Left cardiac atrium (tissue), 4 donors: ENCODE measurements at regions of chr9 and their contacts with region 1.

Region 1: DNA sequence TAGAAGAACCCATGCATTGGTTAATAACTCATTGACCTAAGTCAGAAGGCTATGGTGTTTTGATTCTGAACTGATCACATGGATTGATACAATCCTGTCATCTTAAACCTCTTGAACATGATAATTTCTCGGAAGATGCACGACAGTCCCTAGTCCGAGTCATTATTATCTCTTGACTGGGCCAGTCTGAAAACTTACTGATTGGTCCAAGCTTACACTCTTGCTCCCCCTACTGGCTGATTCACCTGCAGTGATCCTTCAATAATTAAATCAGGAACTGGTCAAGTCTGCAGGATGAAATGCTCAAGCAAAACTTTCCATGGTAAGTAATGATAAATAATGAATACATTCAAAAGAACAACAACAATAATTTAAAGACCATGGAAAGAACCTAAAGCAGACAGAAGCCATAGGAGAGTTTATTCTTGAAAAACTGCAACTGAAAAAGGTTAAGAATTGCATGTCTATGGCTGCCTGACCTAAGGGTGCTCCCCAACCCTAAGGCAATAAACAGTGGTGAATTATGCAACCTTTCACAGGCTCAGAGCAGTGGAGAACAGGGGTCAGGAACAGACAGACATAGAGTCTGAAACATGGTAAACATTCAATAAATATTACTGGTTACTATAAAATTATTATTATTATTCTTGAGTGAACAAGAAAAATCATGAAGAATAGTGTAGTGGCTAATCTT is 79.3 kb downstream of the BRINP1 start:
- DNase-seq: peak; percentile 51
- ATAC-seq: peak in 1 of 2 donors; percentile 71

Region 2: GRCh38 chr9:118595719-118596305 is 694.1 kb before region 1 on chr9:
- intact Hi-C with region 1: loop called in 1 of 2 experiments (anchors 10 kb)
- DNase-seq: peak; percentile 25
- ATAC-seq: peak in 1 of 2 donors; percentile 53

Region 3: DNA sequence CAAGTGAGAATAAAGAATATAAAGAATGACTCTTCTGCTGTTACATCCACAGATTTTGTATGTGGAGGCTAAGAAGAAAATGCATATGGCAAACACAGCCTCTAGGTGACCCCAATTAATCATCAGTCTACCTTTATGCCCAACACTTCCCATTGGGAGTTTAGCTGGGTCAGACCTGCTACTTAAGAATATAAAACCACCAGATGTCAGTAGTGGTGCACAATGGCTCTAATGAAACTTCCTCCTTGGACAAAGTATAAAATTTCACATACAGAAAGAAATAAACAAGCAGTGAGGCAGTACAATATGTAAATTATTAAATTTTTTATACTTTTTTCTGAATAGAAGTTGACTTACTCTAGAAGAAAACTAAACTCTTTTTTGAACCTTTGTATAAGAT is 460.6 kb before region 1 on chr9:
- intact Hi-C with region 1: loop called (anchors 5 to 10 kb)
- DNase-seq: no peak
- ATAC-seq: peak in 1 of 2 donors; percentile 41

Region 4: DNA sequence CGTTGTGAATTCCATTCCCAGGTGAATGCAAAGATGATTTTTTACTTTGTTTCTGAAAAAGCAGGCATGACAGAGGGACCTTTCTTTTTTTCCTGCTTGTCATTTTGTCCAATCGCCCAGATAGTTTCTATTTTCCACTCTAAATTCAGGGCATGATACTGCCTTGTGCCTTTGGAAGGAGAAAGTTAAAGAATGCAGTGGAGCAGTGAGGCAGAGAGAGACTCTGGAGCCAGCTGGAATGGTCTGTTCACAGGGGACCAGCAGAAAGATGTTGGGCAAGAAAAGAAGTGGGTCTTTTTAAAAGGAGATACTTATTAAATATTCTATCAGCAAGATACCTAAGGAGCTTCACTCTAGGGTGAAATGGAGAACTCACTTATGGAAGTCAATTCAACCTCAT is 453.0 kb before region 1 on chr9:
- intact Hi-C with region 1: loop called (anchors 5 to 10 kb)
- DNase-seq: no peak
- ATAC-seq: peak in 1 of 2 donors; percentile 71